ENCODE measurements at regions of chr14 and their contacts with region 1.

Region 1: GRCh38 chr14:93137864-93138263 is 22.1 kb upstream of the ITPK1 start:
- DNase-seq: peak; percentile 28
- ATAC-seq: peak; percentile 22
- H3K4me3 ChIP-seq: no peak overlapping the region
- H3K27ac ChIP-seq: no peak overlapping the region
- H3K4me1 ChIP-seq: no peaks in the 10 kb centered on the region; the same call in 1 of the 2 replicates
- H3K27me3 ChIP-seq: no peaks in the 10 kb centered on the region
- CTCF ChIP-seq: peak; percentile 25; the same call in 1 of the 2 replicates

Region 2: DNA sequence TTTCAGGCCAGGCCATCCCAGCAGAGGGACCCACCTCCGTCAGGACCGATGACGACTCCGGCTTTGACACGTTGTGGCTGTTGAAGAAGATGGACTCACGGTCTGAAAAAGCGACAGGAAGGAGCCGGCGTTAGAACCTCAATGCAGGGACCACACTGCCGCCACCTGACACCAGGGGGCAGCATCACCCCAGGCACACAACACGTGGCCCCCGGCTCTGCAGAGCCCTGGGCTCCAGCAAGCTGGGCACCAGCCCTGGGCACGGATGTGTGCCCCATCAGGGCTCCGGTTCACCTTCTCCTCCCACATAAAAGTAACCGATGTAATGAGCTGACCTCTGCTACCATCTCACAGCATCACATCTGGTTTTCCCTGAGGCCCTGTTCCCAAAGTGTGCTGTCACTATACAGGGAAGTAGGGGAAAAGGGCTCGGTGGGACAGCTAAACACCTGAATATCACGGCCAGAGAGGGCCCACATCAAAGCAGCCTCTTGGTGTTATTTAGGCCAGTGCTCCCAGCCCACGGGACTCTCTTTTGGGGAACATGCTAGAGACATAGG is 185.9 kb before region 1 on chr14:
- CTCF ChIA-PET with region 1: interaction called, 6 read pairs
- POLR2A ChIA-PET with region 1: no interaction called
- intact Hi-C with region 1: loop called (anchors 1 kb)
- DNase-seq: peak; percentile 68
- ATAC-seq: peak; percentile 96
- H3K4me3 ChIP-seq: no peak overlapping the region
- H3K27ac ChIP-seq: no peak overlapping the region
- H3K4me1 ChIP-seq: no peaks in the 10 kb centered on the region
- H3K27me3 ChIP-seq: no peaks in the 10 kb centered on the region
- CTCF ChIP-seq: peak; percentile 94